ENCODE measurements at regions of chr12 and their contacts with region 1.

Region 1: GRCh38 chr12:121802846-121803630 is 771 bp upstream of the SETD1B start:
- DNase-seq: peak; percentile 93
- H3K4me3 ChIP-seq: peak overlapping the region; percentile 75
- H3K27ac ChIP-seq: peak overlapping the region; percentile 95
- H3K4me1 ChIP-seq: peaks cover 69% of the 10 kb centered on the region
- CTCF ChIP-seq: no peak

Region 2: GRCh38 chr12:121124402-121125098 is 678.5 kb before region 1 on chr12:
- CTCF ChIA-PET with region 1: no interaction called
- POLR2A ChIA-PET with region 1: no interaction called
- intact Hi-C with region 1: no loop called
- DNase-seq: no peak
- H3K4me3 ChIP-seq: no peak overlapping the region
- H3K27ac ChIP-seq: no peak overlapping the region
- H3K4me1 ChIP-seq: peaks cover 14% of the 10 kb centered on the region
- CTCF ChIP-seq: no peak

Region 3: GRCh38 chr12:121894633-121895032 is 91.6 kb after region 1 on chr12:
- CTCF ChIA-PET with region 1: no interaction called
- POLR2A ChIA-PET with region 1: interaction called, 14 read pairs
- intact Hi-C with region 1: no loop called
- DNase-seq: peak; percentile 72
- H3K4me3 ChIP-seq: peak overlapping the region; percentile 28
- H3K27ac ChIP-seq: peak overlapping the region; percentile 79
- H3K4me1 ChIP-seq: peaks cover 39% of the 10 kb centered on the region
- CTCF ChIP-seq: peak; percentile 78

Measured in OCI-LY7 (cell line).